Heart left ventricle (tissue), 16 donors: ENCODE measurements at regions of chr10 and their contacts with region 1.

Region 1: GRCh38 chr10:23344241-23344841 is at the start of gene C10orf67:
- DNase-seq: peak; percentile 38 to 71 (median 60)
- ATAC-seq: peak; percentile 69 to 82 (median 73)
- H3K4me3 ChIP-seq: peak within 1 kb of the TSS; percentile 9 to 72 (median 58)
- H3K27ac ChIP-seq: peak within 1 kb of the TSS; percentile 7 to 87 (median 78)
- H3K4me1 ChIP-seq: peaks cover 0 to 40% (median 18%) of the 10 kb centered on the region in 12 donors
- H3K27me3 ChIP-seq: peaks cover 0 to 24% (median 0%) of the 10 kb centered on the region in 9 donors
- CTCF ChIP-seq: no peak
- POLR2A ChIP-seq: peak in 1 of 2 donors; percentile 33
- total RNA-seq, gene C10orf67: 0.12 to 0.75 (median 0.43) TPM

Region 2: GRCh38 chr10:23399701-23400144 is 55.4 kb after region 1 on chr10:
- intact Hi-C with region 1: loop called in 3 of 10 experiments (anchors 2 to 5 kb)
- DNase-seq: peak in 4 of 5 donors; percentile 45 to 86 (median 65)
- ATAC-seq: peak; percentile 94 to 98 (median 96)
- H3K4me3 ChIP-seq: no peak overlapping the region
- H3K27ac ChIP-seq: peak overlapping the region; percentile 19 to 90 (median 74)
- H3K4me1 ChIP-seq: peaks cover 0 to 23% (median 6%) of the 10 kb centered on the region in 12 donors
- H3K27me3 ChIP-seq: no peaks in the 10 kb centered on the region
- CTCF ChIP-seq: no peak
- POLR2A ChIP-seq: no peak